ENCODE measurements at regions of chr1 and their contacts with region 1.

Region 1: GRCh38 chr1:152459596-152460528 is 45.8 kb upstream of the CRNN start:
- DNase-seq: peak; percentile 82
- ATAC-seq: peak; percentile 93
- H3K4me3 Mint-ChIP-seq: peak overlapping the region; percentile 19
- H3K27ac Mint-ChIP-seq: peak overlapping the region; percentile 84
- H3K4me1 Mint-ChIP-seq: peaks cover 32% of the 10 kb centered on the region
- H3K27me3 Mint-ChIP-seq: peaks cover 2% of the 10 kb centered on the region

Region 2: DNA sequence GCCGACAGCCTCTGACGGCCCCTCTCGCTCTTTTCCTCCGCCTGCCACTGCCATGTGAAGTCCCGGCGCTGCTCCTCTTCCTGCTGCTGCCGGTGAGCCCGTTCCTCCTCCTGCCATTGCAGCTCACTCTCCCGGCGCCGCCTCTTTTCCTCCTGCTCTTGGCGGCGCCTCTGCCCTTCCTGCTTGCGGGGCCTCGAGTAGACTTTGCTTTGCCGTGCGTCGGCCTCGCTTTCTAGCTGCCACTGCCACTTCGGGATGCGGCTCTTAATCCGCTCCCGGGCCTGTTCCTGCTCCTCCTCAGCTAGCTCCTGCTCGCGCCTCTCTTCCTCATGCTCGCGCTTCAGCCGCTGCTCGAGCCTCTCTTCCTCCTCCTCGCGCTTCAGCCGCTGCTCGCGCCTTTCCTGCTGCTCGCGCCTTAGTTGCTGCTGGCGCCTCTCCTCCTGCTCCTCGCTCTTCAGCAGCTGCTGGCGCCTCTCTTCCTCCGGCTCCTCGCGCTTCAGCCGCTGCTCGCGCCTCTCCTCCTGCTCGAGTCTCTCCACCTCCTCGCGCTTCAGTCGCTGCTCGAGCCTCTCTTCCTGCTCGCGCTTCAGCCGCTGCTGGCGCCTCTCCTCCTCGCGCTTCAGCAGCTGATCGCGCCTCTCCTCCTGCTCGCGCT is 348.9 kb before region 1 on chr1:
- CTCF ChIA-PET with region 1: interaction called, 12 read pairs
- POLR2A ChIA-PET with region 1: no interaction called
- DNase-seq: peak; percentile 44
- ATAC-seq: peak; percentile 70
- H3K4me3 Mint-ChIP-seq: no peak overlapping the region
- H3K27ac Mint-ChIP-seq: no peak overlapping the region
- H3K4me1 Mint-ChIP-seq: peaks cover 5% of the 10 kb centered on the region
- H3K27me3 Mint-ChIP-seq: peaks cover 20% of the 10 kb centered on the region

Region 3: DNA sequence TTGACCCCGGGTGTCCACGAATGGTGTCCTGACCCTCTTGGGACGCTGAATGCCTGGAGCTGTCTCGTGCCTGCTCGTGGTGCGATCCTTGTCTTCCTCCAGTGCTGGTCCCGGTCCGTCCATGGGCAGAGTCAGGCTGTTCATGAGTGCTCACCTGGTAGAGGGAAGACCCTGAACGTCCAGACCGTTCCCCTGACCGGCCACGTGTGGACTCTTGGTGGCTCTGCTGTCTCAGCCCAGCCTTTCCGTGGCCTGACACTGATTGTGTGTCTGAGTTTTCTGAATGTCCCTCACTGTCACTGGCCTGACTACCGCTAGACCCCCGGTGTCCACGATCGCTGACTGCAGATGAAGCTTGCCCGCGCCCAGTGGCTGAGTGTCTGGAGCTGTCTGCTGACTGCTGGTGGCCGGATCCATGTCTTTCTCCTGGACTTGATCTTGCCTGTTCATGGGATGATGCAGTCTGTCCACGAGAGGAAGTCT is 146.5 kb before region 1 on chr1:
- CTCF ChIA-PET with region 1: no interaction called
- POLR2A ChIA-PET with region 1: no interaction called
- DNase-seq: no peak
- ATAC-seq: no peak
- H3K4me3 Mint-ChIP-seq: no peak overlapping the region
- H3K27ac Mint-ChIP-seq: no peak overlapping the region
- H3K4me1 Mint-ChIP-seq: no peaks in the 10 kb centered on the region
- H3K27me3 Mint-ChIP-seq: no peaks in the 10 kb centered on the region

Region 4: GRCh38 chr1:152347116-152347728 is 112.6 kb before region 1 on chr1:
- CTCF ChIA-PET with region 1: interaction called, 68 read pairs
- POLR2A ChIA-PET with region 1: no interaction called
- DNase-seq: peak; percentile 69
- ATAC-seq: peak; percentile 60
- H3K4me3 Mint-ChIP-seq: no peak overlapping the region
- H3K27ac Mint-ChIP-seq: no peak overlapping the region
- H3K4me1 Mint-ChIP-seq: no peaks in the 10 kb centered on the region
- H3K27me3 Mint-ChIP-seq: peaks cover 22% of the 10 kb centered on the region

Region 5: DNA sequence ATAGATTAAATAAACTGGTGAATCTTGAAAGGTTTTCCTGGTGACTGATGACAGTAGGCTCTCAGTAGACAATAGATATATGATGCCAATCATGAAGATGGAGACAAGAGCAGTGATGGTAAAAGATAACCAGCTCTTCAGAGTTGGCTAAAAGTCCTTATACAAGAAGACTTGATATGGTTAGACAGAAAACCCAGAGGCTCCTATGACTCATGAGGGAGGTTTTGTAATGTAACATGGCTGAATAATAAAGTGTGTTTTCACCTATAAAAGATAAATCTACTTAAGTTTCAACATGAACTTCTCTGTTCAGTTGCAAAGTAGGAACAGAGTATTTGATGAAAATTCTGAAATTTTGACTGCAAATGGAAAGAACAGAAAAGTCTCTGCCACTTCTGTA is 33.1 kb before region 1 on chr1:
- CTCF ChIA-PET with region 1: interaction called, 10 read pairs
- POLR2A ChIA-PET with region 1: no interaction called
- DNase-seq: no peak
- ATAC-seq: no peak
- H3K4me3 Mint-ChIP-seq: no peak overlapping the region
- H3K27ac Mint-ChIP-seq: no peak overlapping the region
- H3K4me1 Mint-ChIP-seq: no peaks in the 10 kb centered on the region
- H3K27me3 Mint-ChIP-seq: peaks cover 2% of the 10 kb centered on the region

Region 6: GRCh38 chr1:152473887-152474537 is 14.2 kb after region 1 on chr1:
- CTCF ChIA-PET with region 1: interaction called, 19 read pairs
- POLR2A ChIA-PET with region 1: no interaction called
- DNase-seq: no peak
- ATAC-seq: no peak
- H3K4me3 Mint-ChIP-seq: no peak overlapping the region
- H3K27ac Mint-ChIP-seq: no peak overlapping the region
- H3K4me1 Mint-ChIP-seq: no peaks in the 10 kb centered on the region
- H3K27me3 Mint-ChIP-seq: peaks cover 3% of the 10 kb centered on the region